Activated CD4-positive, alpha-beta T cell treated with anti-CD3 and anti-CD28 coated beads for 36 hours (primary cell): ENCODE measurements at regions of chr19 and their contacts with region 1.

Region 1: GRCh38 chr19:7829561-7830271 is at the start of gene EVI5L:
- DNase-seq: peak; percentile 100
- ATAC-seq: peak; percentile 91
- H3K4me3 Mint-ChIP-seq: peak within 1 kb of the TSS; percentile 83
- H3K27ac Mint-ChIP-seq: peak within 1 kb of the TSS; percentile 94
- H3K4me1 Mint-ChIP-seq: peaks cover 14% of the 10 kb centered on the region
- H3K27me3 Mint-ChIP-seq: peaks cover 2% of the 10 kb centered on the region
- total RNA-seq, gene EVI5L: 4.8 to 5.9 TPM

Region 2: GRCh38 chr19:7394731-7395359 is 434.9 kb before region 1 on chr19:
- CTCF ChIA-PET with region 1: no interaction called
- POLR2A ChIA-PET with region 1: no interaction called
- intact Hi-C with region 1: loop called in 1 of 2 experiments (anchors 1 kb)
- DNase-seq: peak; percentile 94
- ATAC-seq: peak; percentile 86
- H3K4me3 Mint-ChIP-seq: peak overlapping the region; percentile 83
- H3K27ac Mint-ChIP-seq: peak overlapping the region; percentile 78
- H3K4me1 Mint-ChIP-seq: peaks cover 36% of the 10 kb centered on the region
- H3K27me3 Mint-ChIP-seq: no peaks in the 10 kb centered on the region

Region 3: GRCh38 chr19:7562646-7563393 is 266.9 kb before region 1 on chr19:
- CTCF ChIA-PET with region 1: interaction called, 5 read pairs
- POLR2A ChIA-PET with region 1: no interaction called
- intact Hi-C with region 1: loop called in 1 of 2 experiments (anchors 1 kb)
- DNase-seq: peak; percentile 31
- ATAC-seq: no peak
- H3K4me3 Mint-ChIP-seq: no peak overlapping the region
- H3K27ac Mint-ChIP-seq: no peak overlapping the region
- H3K4me1 Mint-ChIP-seq: no peaks in the 10 kb centered on the region
- H3K27me3 Mint-ChIP-seq: no peaks in the 10 kb centered on the region

Region 4: GRCh38 chr19:7806876-7807275 is 22.8 kb before region 1 on chr19:
- CTCF ChIA-PET with region 1: no interaction called
- POLR2A ChIA-PET with region 1: no interaction called
- intact Hi-C with region 1: loop called (anchors 1 kb)
- DNase-seq: no peak
- ATAC-seq: no peak
- H3K4me3 Mint-ChIP-seq: no peak overlapping the region
- H3K27ac Mint-ChIP-seq: no peak overlapping the region
- H3K4me1 Mint-ChIP-seq: peaks cover 11% of the 10 kb centered on the region
- H3K27me3 Mint-ChIP-seq: peaks cover 35% of the 10 kb centered on the region

Region 5: DNA sequence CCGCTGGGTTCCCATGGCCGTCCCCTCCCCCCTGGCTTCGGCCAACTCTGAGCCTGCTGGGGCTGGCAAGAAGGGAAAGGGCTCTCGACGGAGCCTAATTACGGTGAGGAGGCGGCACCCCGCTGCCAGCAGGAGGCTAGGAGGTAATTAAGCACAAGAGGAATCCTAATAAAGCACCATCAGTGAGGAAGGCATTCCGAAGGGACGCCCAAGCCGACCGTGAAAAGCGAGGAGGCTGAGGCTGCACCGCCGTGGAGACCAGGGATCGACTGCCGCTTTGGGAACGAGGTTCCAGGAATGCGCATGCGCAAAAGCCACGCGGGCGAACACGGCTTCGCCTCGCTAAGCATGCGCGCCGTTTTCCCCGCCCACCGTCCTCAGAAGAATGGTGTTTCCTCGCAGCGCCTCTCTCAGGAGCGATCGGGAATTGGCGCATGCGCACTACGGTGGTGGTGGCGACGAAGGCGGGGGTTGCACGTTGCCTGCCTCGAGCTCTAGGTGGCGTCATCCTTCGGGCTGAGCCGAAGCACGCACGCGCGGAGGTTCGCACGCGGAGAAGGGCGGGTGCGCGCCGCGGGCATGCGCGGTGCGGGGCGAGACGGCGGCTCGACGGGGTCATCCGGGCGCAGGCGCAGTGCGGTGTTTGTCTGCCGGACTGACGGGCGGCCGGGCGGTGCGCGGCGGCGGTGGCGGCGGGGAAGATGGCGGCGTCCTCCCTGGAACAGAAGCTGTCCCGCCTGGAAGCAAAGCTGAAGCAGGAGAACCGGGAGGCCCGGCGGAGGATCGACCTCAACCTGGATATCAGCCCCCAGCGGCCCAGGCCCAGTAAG is 73.7 kb after region 1 on chr19 and contains the start of gene MAP2K7:
- CTCF ChIA-PET with region 1: no interaction called
- POLR2A ChIA-PET with region 1: interaction called, 3 read pairs
- intact Hi-C with region 1: loop called in 1 of 2 experiments (anchors 1 kb)
- DNase-seq: peak; percentile 100
- ATAC-seq: peak; percentile 91
- H3K4me3 Mint-ChIP-seq: peak within 1 kb of the TSS; percentile 85
- H3K27ac Mint-ChIP-seq: peak within 1 kb of the TSS; percentile 92
- H3K4me1 Mint-ChIP-seq: peaks cover 22% of the 10 kb centered on the region
- H3K27me3 Mint-ChIP-seq: no peaks in the 10 kb centered on the region
- total RNA-seq, gene MAP2K7: 32.2 to 33.7 TPM

Region 6: GRCh38 chr19:8592231-8593009 is 762.7 kb after region 1 on chr19:
- CTCF ChIA-PET with region 1: no interaction called
- POLR2A ChIA-PET with region 1: no interaction called
- intact Hi-C with region 1: loop called in 1 of 2 experiments (anchors 5 kb)
- DNase-seq: peak; percentile 99
- ATAC-seq: peak; percentile 94
- H3K4me3 Mint-ChIP-seq: peak overlapping the region; percentile 70
- H3K27ac Mint-ChIP-seq: no peak overlapping the region
- H3K4me1 Mint-ChIP-seq: peaks cover 15% of the 10 kb centered on the region
- H3K27me3 Mint-ChIP-seq: no peaks in the 10 kb centered on the region